ENCODE measurements at regions of chr12 and their contacts with region 1.

Region 1: GRCh38 chr12:9999016-9999415 is at the start of gene CLEC1B:
- DNase-seq: no peak
- ATAC-seq: no peak
- H3K4me3 ChIP-seq: no peak within 1 kb of the TSS
- H3K27ac ChIP-seq: no peak within 1 kb of the TSS
- H3K4me1 ChIP-seq: 0 out of 2 replicates have a peak, but pooled peaks cover 1% of the 10 kb centered on the region
- H3K27me3 ChIP-seq: peaks cover 9% of the 10 kb centered on the region
- CTCF ChIP-seq: no peak
- POLR2A ChIP-seq: no peak
- RAD21 ChIP-seq: no peak
- total RNA-seq, gene CLEC1B: not detected in 2 replicates

Region 2: GRCh38 chr12:9906873-9907272 is 92.1 kb before region 1 on chr12:
- CTCF ChIA-PET with region 1: no interaction called
- POLR2A ChIA-PET with region 1: no interaction called
- dilution Hi-C with region 1: no loop called
- in situ Hi-C with region 1: no loop called
- intact Hi-C with region 1: no loop called
- DNase-seq: no peak
- ATAC-seq: no peak
- H3K4me3 ChIP-seq: no peak overlapping the region
- H3K27ac ChIP-seq: no peak overlapping the region
- H3K4me1 ChIP-seq: no peaks in the 10 kb centered on the region
- H3K27me3 ChIP-seq: no peaks in the 10 kb centered on the region
- CTCF ChIP-seq: no peak
- POLR2A ChIP-seq: no peak
- RAD21 ChIP-seq: no peak

Region 3: DNA sequence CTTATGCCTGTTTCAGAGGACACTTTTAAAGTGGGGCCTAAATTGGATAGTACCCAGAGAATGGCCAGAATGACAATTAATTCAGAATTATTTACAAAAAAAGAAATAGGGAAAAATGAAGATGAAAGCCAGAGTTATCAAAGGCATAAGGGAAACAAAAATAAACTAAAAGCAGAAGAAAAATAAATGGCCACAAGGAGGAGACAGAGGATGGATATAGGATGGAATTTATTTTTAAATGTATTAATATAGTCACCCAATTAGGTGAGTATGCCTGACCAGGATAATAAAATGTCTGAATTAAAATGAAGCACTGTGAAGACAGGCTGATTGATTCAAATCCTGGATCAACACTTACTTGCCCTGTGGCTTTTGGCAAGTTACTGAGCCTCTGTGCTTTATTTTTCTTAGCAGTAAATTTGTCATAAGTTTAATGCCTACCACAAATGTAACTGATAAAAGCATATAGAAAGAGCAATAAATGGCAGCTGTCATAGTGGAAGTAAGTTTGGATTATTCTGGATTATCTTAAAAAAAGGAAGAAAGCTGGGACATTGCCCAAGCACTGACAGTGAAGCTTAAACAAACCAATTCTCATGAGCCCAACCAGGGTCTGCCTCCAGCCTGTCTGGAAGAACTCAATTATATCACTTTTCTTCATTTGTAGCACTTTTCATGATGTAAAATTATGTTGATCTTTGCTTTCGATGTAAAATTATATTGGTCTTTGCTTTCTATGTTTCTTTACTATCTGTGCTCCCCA is 34.9 kb after region 1 on chr12:
- CTCF ChIA-PET with region 1: no interaction called
- POLR2A ChIA-PET with region 1: no interaction called
- dilution Hi-C with region 1: no loop called
- in situ Hi-C with region 1: loop called (anchors 5 kb)
- intact Hi-C with region 1: loop called (anchors 2 kb)
- DNase-seq: peak; percentile 18
- ATAC-seq: peak; percentile 50
- H3K4me3 ChIP-seq: no peak overlapping the region
- H3K27ac ChIP-seq: no peak overlapping the region
- H3K4me1 ChIP-seq: no peaks in the 10 kb centered on the region
- H3K27me3 ChIP-seq: no peaks in the 10 kb centered on the region
- CTCF ChIP-seq: peak; percentile 72
- POLR2A ChIP-seq: no peak
- RAD21 ChIP-seq: peak; percentile 72